WTC11 (cell line): ENCODE measurements at regions of chr14 and their contacts with region 1.

Region 1: GRCh38 chr14:93939304-93940229 is 12.4 kb downstream of the FAM181A start:
- DNase-seq: peak; percentile 93
- ATAC-seq: peak; percentile 90
- H3K4me3 Mint-ChIP-seq: peak overlapping the region; percentile 57
- H3K27ac Mint-ChIP-seq: no peak overlapping the region
- H3K4me1 Mint-ChIP-seq: peaks cover 10% of the 10 kb centered on the region
- H3K27me3 Mint-ChIP-seq: peaks cover 30% of the 10 kb centered on the region
- CTCF ChIP-seq: peak; percentile 92

Region 2: DNA sequence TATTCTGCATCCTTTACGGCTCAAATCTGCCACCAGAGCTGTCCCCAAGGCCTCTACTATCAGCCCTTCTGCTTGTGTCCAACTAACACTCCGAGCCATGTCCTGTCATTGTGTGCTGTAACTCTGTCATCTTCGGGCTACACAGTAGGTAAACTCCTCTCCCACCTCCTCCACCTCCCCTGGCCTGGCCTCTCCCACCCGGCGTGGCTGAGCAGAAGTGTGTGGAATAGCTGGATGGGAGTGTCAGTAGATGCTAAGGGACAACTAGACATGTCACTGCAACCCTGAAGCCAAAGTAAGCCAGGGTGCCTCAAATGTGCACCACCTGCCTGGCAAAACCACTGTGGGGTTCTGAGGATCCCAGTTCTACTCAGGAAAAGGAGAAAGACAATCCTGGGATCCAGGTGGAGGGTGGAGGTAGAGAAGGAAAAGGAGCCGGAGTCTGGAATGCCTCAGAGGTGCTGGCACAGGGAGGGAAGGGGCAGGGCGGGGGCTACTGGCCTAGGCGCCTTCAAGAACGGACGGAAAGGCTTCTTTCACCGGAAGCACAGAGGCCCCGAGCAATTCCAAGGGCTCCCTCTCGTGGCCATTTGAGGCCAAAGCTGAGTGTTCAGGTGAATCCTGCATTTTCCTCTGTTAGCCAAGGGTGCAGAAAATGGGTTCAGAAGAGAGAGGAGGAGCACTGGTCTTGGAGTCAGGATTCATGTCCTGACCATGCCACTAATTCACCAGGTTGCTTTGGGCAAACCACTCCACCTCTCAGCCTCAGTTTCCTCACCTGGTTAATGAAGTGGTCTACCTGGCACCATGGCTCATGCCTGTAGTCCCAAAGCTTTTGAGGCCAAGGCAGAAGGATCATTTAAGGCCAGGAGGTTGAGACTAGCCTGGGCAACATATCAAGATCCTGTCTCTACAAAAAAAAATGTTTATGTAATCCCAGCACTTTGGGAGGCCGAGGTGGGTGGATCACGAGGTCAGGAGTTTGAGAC is 32.9 kb before region 1 on chr14:
- CTCF ChIA-PET with region 1: interaction called, 20 read pairs
- POLR2A ChIA-PET with region 1: no interaction called
- DNase-seq: peak; percentile 84
- ATAC-seq: peak; percentile 84
- H3K4me3 Mint-ChIP-seq: no peak overlapping the region
- H3K27ac Mint-ChIP-seq: no peak overlapping the region; the same call in 1 of the 2 replicates
- H3K4me1 Mint-ChIP-seq: peaks cover 20% of the 10 kb centered on the region
- H3K27me3 Mint-ChIP-seq: no peaks in the 10 kb centered on the region; the same call in 1 of the 2 replicates
- CTCF ChIP-seq: peak; percentile 72

Region 3: DNA sequence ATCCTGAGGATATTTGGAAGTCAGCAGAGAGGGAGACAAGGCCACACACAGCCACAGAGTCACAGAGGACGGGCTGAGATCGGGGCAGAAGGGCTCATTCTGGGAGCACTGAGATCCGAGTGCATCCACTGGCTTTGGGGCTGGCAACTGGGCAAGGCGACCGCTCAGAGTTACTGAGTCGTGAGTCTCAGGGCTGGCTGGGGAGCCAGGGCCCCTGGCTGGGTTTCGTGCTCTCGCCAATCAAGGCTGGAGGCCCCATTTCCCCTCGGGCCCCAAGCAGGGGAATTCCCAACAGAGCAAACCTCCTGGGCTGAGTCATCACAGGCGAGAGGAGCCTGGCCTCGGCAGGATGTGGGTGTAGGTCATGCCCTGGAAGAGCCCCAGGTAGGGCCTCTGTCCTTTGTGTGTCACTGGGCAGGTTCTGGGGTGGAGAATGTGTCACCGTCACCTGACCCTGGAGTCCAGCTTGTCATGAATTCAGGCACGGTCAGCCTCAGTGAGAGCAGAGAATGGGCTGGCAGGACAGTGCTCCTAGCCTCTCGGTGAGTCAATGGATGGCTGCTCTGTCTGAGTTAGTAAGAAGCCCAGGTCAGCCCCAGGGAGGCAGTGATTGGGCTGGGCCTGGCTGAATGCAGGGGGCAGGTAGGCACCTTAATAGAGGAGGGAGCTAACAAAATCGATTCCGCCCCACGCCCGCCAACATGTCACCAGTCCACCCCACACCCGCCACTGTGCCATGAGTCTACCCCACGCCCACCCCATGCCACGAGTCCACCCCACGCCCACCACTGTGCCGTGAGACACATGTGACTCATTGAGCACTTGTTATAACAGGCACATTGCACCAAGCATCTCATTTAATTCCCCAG is 19.9 kb after region 1 on chr14:
- CTCF ChIA-PET with region 1: interaction called, 52 read pairs
- POLR2A ChIA-PET with region 1: no interaction called
- DNase-seq: no peak
- ATAC-seq: peak; percentile 63
- H3K4me3 Mint-ChIP-seq: no peak overlapping the region
- H3K27ac Mint-ChIP-seq: peak overlapping the region; percentile 76; the same call in 1 of the 2 replicates
- H3K4me1 Mint-ChIP-seq: peaks cover 25% of the 10 kb centered on the region
- H3K27me3 Mint-ChIP-seq: no peaks in the 10 kb centered on the region
- CTCF ChIP-seq: no peak

Region 4: DNA sequence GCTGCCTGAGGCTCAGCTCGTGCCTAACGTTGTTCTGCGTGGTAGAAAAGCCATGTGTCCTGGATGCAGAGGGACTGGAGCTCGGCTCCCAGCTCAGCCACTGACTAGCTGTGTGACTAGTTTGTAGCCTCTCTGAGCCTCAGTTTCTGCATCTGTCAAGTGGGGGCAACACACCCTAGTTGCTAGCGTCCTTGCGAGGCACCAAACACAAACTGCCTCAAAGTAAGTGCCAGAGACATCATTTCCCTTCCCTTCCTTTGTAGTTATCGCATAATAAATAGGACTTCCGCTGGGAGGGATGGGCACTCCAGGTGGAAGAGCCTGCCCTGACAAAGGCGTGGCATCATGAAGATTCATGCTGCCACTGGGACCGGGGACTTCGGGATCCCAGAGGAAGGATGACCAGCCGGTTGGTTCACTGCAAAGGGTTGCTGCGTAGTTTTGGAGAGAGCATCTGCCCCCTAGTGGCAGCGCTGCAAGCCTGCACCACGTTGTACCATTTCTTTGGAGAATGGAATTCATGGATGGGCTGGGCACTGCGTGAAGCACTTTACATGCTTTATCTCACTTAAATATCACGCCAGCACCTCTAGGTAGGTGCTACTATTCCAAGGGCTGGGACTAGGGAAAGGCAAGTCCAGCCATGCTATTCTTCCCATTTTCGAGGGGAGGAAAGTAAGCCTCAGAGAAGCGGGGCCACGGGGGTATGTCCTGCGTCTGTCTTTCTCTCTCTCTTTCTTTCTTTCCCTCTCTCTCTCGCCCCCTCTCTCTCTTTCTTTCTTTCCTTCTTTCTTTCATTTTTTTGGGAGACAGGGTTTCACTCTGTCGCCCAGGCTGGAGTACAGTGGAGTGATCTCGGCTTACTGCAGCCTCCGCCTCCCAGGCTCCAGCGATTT is 62.2 kb after region 1 on chr14:
- CTCF ChIA-PET with region 1: interaction called, 230 read pairs
- POLR2A ChIA-PET with region 1: no interaction called
- DNase-seq: peak; percentile 69
- ATAC-seq: peak; percentile 95
- H3K4me3 Mint-ChIP-seq: no peak overlapping the region
- H3K27ac Mint-ChIP-seq: no peak overlapping the region
- H3K4me1 Mint-ChIP-seq: 0 out of 2 replicates have a peak, but pooled peaks cover 3% of the 10 kb centered on the region
- H3K27me3 Mint-ChIP-seq: peaks cover 4% of the 10 kb centered on the region; the same call in 1 of the 2 replicates
- CTCF ChIP-seq: peak; percentile 95

Region 5: GRCh38 chr14:94026173-94026888 is 86.8 kb after region 1 on chr14 and contains the start of gene OTUB2:
- CTCF ChIA-PET with region 1: interaction called, 29 read pairs
- POLR2A ChIA-PET with region 1: no interaction called
- DNase-seq: peak; percentile 98
- ATAC-seq: peak; percentile 99
- H3K4me3 Mint-ChIP-seq: peak within 1 kb of the TSS; percentile 65
- H3K27ac Mint-ChIP-seq: no peak within 1 kb of the TSS
- H3K4me1 Mint-ChIP-seq: peaks cover 20% of the 10 kb centered on the region
- H3K27me3 Mint-ChIP-seq: no peaks in the 10 kb centered on the region
- CTCF ChIP-seq: no peak
- total RNA-seq, gene OTUB2: 3.5 to 4.5 TPM (median 3.9 TPM) in 3 replicates

Region 6: GRCh38 chr14:94136575-94137331 is 197.2 kb after region 1 on chr14:
- CTCF ChIA-PET with region 1: interaction called, 45 read pairs
- POLR2A ChIA-PET with region 1: interaction called, 3 read pairs
- DNase-seq: peak; percentile 93
- ATAC-seq: peak; percentile 87
- H3K4me3 Mint-ChIP-seq: no peak overlapping the region
- H3K27ac Mint-ChIP-seq: no peak overlapping the region
- H3K4me1 Mint-ChIP-seq: peaks cover 19% of the 10 kb centered on the region
- H3K27me3 Mint-ChIP-seq: peaks cover 7% of the 10 kb centered on the region; the same call in 1 of the 2 replicates
- CTCF ChIP-seq: peak; percentile 92